Caco-2 (cell line): ENCODE measurements at regions of chr12 and their contacts with region 1.

Region 1: DNA sequence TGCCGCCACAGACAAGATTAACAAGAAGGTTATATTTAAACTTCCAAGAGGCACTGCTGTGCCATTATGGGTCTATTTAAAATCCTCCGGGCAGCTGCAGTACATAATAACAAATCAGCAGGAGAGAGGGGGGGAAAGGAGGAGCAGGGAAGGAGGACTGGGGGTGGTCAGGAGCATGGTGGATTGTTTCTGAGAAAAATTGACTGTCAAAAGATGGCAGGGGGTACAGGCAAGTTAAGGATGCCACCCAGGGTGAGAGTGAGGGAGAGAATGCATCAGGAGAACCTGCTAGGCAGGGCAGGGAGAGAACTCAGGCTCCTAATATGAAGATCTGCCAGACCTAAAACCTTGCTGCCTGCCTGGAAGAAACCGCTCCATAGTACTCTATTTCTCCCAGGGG is 181.8 kb downstream of the GRIN2B start:
- DNase-seq: no peak
- H3K4me3 ChIP-seq: no peak overlapping the region
- H3K4me3 Mint-ChIP-seq: no peak overlapping the region
- H3K27ac Mint-ChIP-seq: no peak overlapping the region
- H3K4me1 ChIP-seq: no peaks in the 10 kb centered on the region
- H3K4me1 Mint-ChIP-seq: no peaks in the 10 kb centered on the region
- H3K27me3 ChIP-seq: no peaks in the 10 kb centered on the region
- H3K27me3 Mint-ChIP-seq: no peaks in the 10 kb centered on the region
- CTCF ChIP-seq: no peak

Region 2: GRCh38 chr12:13745111-13745685 is 54.4 kb before region 1 on chr12:
- CTCF ChIA-PET with region 1: no interaction called
- POLR2A ChIA-PET with region 1: no interaction called
- intact Hi-C with region 1: loop called (anchors 2 kb)
- DNase-seq: no peak
- H3K4me3 ChIP-seq: no peak overlapping the region
- H3K4me3 Mint-ChIP-seq: no peak overlapping the region
- H3K27ac Mint-ChIP-seq: no peak overlapping the region
- H3K4me1 ChIP-seq: no peaks in the 10 kb centered on the region
- H3K4me1 Mint-ChIP-seq: peaks cover 6% of the 10 kb centered on the region
- H3K27me3 ChIP-seq: no peaks in the 10 kb centered on the region
- H3K27me3 Mint-ChIP-seq: no peaks in the 10 kb centered on the region
- CTCF ChIP-seq: no peak